T-cell (primary cell): ENCODE measurements at regions of chr13 and their contacts with region 1.

Region 1: GRCh38 chr13:46831588-46832194 is 34.7 kb upstream of the ESD start:
- DNase-seq: peak in 10 of 35 experiments; percentile 5 to 57 (median 11)
- ATAC-seq: no peak
- H3K4me3 ChIP-seq: no peak overlapping the region
- H3K4me3 Mint-ChIP-seq: no peak overlapping the region
- H3K27ac ChIP-seq: no peak overlapping the region
- H3K27ac Mint-ChIP-seq: no peak overlapping the region
- H3K4me1 ChIP-seq: no peaks in the 10 kb centered on the region
- H3K4me1 Mint-ChIP-seq: no peaks in the 10 kb centered on the region
- H3K27me3 ChIP-seq: no peaks in the 10 kb centered on the region
- H3K27me3 Mint-ChIP-seq: peaks cover 4 to 14% of the 10 kb centered on the region in 2 donors

Region 2: GRCh38 chr13:46844431-46844830 is 12.7 kb after region 1 on chr13:
- CTCF ChIA-PET with region 1: interaction called in 1 of 2 experiments, 11 read pairs
- POLR2A ChIA-PET with region 1: interaction called in 1 of 2 experiments, 4 read pairs
- DNase-seq: no peak
- ATAC-seq: no peak
- H3K4me3 ChIP-seq: no peak overlapping the region
- H3K4me3 Mint-ChIP-seq: no peak overlapping the region
- H3K27ac ChIP-seq: no peak overlapping the region
- H3K27ac Mint-ChIP-seq: no peak overlapping the region
- H3K4me1 ChIP-seq: no peaks in the 10 kb centered on the region
- H3K4me1 Mint-ChIP-seq: no peaks in the 10 kb centered on the region
- H3K27me3 ChIP-seq: no peaks in the 10 kb centered on the region
- H3K27me3 Mint-ChIP-seq: peaks cover 12 to 13% of the 10 kb centered on the region in 2 donors

Region 3: GRCh38 chr13:47206111-47206510 is 374.4 kb after region 1 on chr13:
- CTCF ChIA-PET with region 1: no interaction called
- POLR2A ChIA-PET with region 1: no interaction called
- DNase-seq: no peak
- ATAC-seq: no peak
- H3K4me3 ChIP-seq: no peak overlapping the region
- H3K4me3 Mint-ChIP-seq: no peak overlapping the region
- H3K27ac ChIP-seq: no peak overlapping the region
- H3K27ac Mint-ChIP-seq: no peak overlapping the region
- H3K4me1 ChIP-seq: no peaks in the 10 kb centered on the region
- H3K4me1 Mint-ChIP-seq: no peaks in the 10 kb centered on the region
- H3K27me3 ChIP-seq: no peaks in the 10 kb centered on the region
- H3K27me3 Mint-ChIP-seq: peaks cover 0 to 9% of the 10 kb centered on the region in 2 donors